ENCODE measurements at regions of chr19 and their contacts with region 1.

Region 1: DNA sequence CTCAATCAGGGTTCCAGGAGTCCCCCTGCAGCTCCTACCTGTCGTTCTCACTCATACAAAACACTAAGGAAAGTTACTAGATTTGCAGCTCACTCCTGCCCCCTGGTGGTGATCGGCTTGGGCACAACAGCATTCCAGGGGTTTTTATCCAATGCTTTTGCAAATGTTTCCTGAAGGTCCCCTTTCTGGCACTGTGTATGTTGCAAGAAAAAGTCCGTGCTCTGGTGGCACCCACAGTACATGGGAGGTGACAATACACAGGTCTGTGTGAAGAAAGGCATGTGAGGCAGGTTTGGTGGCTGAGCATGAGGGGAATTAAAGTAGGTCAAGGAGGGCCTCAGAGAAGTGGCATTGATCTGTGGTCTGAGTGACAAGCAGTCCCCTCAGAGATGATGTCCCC is 8.6 kb upstream of the TYK2 start:
- DNase-seq: peak; percentile 57 to 91 (median 68)
- ATAC-seq: peak; percentile 84
- H3K4me3 ChIP-seq: no peak overlapping the region
- H3K27ac ChIP-seq: no peak overlapping the region
- H3K4me1 ChIP-seq: peaks cover 0 to 6% of the 10 kb centered on the region in 2 experiments; a peak in 2 of 5 replicates
- H3K27me3 ChIP-seq: no peaks in the 10 kb centered on the region
- CTCF ChIP-seq: peak; percentile 92 to 95 (median 94)
- EP300 ChIP-seq: no peak
- POLR2A ChIP-seq: peak; percentile 56
- RAD21 ChIP-seq: peak; percentile 92 to 96

Region 2: GRCh38 chr19:10259162-10259905 is 129.6 kb before region 1 on chr19:
- CTCF ChIA-PET with region 1: interaction called, 72 read pairs
- POLR2A ChIA-PET with region 1: interaction called, 17 read pairs
- in situ Hi-C with region 1: no loop called
- intact Hi-C with region 1: loop called (anchors 2 kb)
- DNase-seq: peak; percentile 60 to 94 (median 67)
- ATAC-seq: peak; percentile 90
- H3K4me3 ChIP-seq: no peak overlapping the region
- H3K27ac ChIP-seq: no peak overlapping the region
- H3K4me1 ChIP-seq: peaks cover 5 to 34% of the 10 kb centered on the region in 2 experiments; a peak in 3 of 5 replicates
- H3K27me3 ChIP-seq: no peaks in the 10 kb centered on the region
- CTCF ChIP-seq: peak; percentile 78 to 87 (median 85)
- EP300 ChIP-seq: no peak
- POLR2A ChIP-seq: peak; percentile 40; the same call in 1 of the 2 replicates
- RAD21 ChIP-seq: peak; percentile 50 to 63